ENCODE measurements at regions of chr20 and their contacts with region 1.

Region 1: GRCh38 chr20:36835453-36836198 is 40.3 kb upstream of the TLDC2 start:
- DNase-seq: peak; percentile 94
- ATAC-seq: peak; percentile 98
- H3K4me3 Mint-ChIP-seq: peak overlapping the region; percentile 76
- H3K27ac Mint-ChIP-seq: peak overlapping the region; percentile 85
- H3K4me1 Mint-ChIP-seq: peaks cover 13% of the 10 kb centered on the region
- H3K27me3 Mint-ChIP-seq: no peaks in the 10 kb centered on the region

Region 2: DNA sequence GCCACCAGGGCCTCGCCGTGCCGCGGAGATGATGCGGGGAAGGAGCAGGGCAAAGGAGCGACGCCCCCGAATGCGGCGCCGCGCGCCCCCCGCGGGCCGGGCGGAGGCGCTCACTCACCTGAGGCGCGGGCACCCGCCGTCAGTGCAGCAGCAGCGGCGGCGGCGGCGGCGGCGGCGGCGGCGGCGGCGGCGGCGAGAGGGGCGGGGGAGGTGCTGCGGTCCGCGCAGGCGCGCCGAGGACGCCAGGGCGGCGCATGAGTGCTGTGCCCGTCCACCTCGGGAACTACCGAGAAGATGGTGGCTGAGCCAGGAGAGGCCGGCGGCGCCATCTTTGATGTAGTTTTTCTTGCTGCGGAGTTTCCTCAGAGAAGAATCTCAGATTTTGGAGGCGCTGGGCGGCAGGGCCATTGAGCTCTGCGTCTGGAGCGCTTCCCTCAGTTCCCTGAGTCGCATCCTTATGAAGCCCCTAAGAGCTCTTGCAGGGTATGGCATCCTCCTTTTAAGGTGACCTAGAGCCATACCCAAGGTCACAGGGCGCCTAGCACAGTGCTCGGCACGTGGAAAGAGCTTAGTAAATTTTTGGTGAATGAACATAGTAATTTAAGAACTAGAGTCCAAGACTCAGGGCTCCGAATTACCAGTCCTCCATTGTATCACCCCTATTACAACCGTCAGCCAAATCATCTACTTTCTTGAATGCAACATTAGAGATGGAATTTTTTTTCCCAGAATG is 89.5 kb before region 1 on chr20 and contains the start of gene NDRG3:
- CTCF ChIA-PET with region 1: interaction called, 4 read pairs
- POLR2A ChIA-PET with region 1: no interaction called
- intact Hi-C with region 1: loop called in 1 of 2 experiments (anchors 1 kb)
- DNase-seq: peak; percentile 96
- ATAC-seq: peak; percentile 99
- H3K4me3 Mint-ChIP-seq: peak within 1 kb of the TSS; percentile 81
- H3K27ac Mint-ChIP-seq: peak within 1 kb of the TSS; percentile 87
- H3K4me1 Mint-ChIP-seq: peaks cover 20% of the 10 kb centered on the region
- H3K27me3 Mint-ChIP-seq: no peaks in the 10 kb centered on the region
- total RNA-seq, gene NDRG3: 24.8 to 27.5 TPM

Region 3: GRCh38 chr20:36808317-36809257 is 27.0 kb before region 1 on chr20:
- CTCF ChIA-PET with region 1: interaction called, 17 read pairs
- POLR2A ChIA-PET with region 1: interaction called, 3 read pairs
- intact Hi-C with region 1: no loop called
- DNase-seq: peak; percentile 90
- ATAC-seq: peak; percentile 78
- H3K4me3 Mint-ChIP-seq: no peak overlapping the region
- H3K27ac Mint-ChIP-seq: no peak overlapping the region
- H3K4me1 Mint-ChIP-seq: no peaks in the 10 kb centered on the region
- H3K27me3 Mint-ChIP-seq: no peaks in the 10 kb centered on the region

Region 4: DNA sequence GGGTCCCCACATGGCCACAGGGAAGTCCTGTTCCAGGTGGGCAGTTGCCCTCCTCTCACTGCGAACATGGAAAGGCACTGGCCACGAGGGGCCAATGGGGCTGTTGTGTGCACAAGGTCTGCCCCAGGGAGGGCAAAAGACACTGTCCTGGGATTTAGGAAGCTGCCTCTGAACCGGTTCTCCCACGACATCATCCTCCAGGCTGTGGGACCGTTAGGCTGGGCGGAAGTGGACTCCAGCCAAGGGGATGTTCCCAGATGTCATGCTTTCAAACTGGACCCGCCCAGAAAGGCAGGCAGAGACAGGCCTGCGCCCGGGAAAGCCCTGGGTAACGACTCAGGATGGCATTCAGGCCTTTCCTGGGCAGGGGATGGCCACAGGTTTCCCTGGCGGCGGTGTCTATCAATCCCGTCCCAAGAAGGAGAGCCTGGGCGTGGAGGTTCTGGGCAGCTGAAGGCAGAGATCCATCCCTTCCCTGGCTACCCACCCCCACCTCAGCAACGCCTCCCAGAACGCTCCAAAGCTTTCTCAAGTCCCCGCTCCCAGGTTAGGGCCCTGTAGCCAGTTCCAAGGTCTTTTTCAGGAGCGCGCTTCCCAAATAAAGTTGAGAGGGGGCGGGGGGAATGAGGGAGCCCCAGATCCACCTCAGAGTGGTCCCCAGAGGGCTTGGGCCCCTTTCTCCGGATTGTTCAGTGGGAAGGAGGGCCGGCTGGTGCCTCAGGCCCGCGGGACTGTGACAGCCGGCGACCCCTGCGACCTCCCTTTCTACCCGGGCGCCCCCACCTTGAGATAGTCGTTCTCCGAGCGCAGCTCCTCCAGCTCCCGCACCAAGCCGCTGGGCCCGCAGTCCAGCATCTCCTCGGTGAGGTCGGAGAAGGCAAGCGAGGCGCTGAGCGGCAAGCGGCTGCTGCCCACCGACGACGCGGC is 26.5 kb after region 1 on chr20:
- CTCF ChIA-PET with region 1: interaction called, 6 read pairs
- POLR2A ChIA-PET with region 1: interaction called, 4 read pairs
- intact Hi-C with region 1: loop called in 1 of 2 experiments (anchors 1 kb)
- DNase-seq: no peak
- ATAC-seq: no peak
- H3K4me3 Mint-ChIP-seq: peak overlapping the region; percentile 37
- H3K27ac Mint-ChIP-seq: no peak overlapping the region
- H3K4me1 Mint-ChIP-seq: peaks cover 10% of the 10 kb centered on the region
- H3K27me3 Mint-ChIP-seq: peaks cover 21% of the 10 kb centered on the region

Region 5: GRCh38 chr20:36886859-36887751 is 51.5 kb after region 1 on chr20:
- CTCF ChIA-PET with region 1: interaction called, 13 read pairs
- POLR2A ChIA-PET with region 1: no interaction called
- intact Hi-C with region 1: loop called in 1 of 2 experiments (anchors 1 kb)
- DNase-seq: peak; percentile 92
- ATAC-seq: peak; percentile 97
- H3K4me3 Mint-ChIP-seq: no peak overlapping the region
- H3K27ac Mint-ChIP-seq: peak overlapping the region; percentile 9
- H3K4me1 Mint-ChIP-seq: peaks cover 14% of the 10 kb centered on the region
- H3K27me3 Mint-ChIP-seq: no peaks in the 10 kb centered on the region

Region 6: GRCh38 chr20:36932476-36933426 is 97.1 kb after region 1 on chr20:
- CTCF ChIA-PET with region 1: no interaction called
- POLR2A ChIA-PET with region 1: interaction called, 12 read pairs
- intact Hi-C with region 1: no loop called
- DNase-seq: no peak
- ATAC-seq: no peak
- H3K4me3 Mint-ChIP-seq: no peak overlapping the region
- H3K27ac Mint-ChIP-seq: peak overlapping the region; percentile 17
- H3K4me1 Mint-ChIP-seq: peaks cover 57% of the 10 kb centered on the region
- H3K27me3 Mint-ChIP-seq: no peaks in the 10 kb centered on the region